CD8-positive, alpha-beta T cell (primary cell): ENCODE measurements at regions of chr21 and their contacts with region 1.

Region 1: DNA sequence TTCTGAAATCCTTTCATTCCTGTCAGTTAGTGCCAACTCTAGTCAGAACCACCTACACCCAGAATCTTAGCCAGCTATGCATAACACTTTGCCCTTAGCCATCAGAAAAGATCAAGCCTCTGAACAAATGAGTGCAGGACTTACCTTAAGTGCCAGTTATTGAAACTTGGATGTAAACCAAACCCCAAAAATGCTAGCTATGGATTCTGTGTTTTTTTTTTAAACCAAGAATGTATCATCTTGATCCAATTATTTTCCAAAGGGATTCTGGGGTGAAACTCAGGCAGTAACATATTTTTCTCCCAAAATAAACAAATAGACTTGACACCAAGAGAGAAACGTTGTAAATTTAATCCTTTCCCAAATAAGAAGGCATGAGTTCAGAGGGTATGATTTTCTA is 538.6 kb upstream of the ADAMTS5 start:
- DNase-seq: no peak
- ATAC-seq: no peak
- H3K4me3 ChIP-seq: no peak overlapping the region
- H3K4me3 Mint-ChIP-seq: no peak overlapping the region
- H3K27ac ChIP-seq: no peak overlapping the region
- H3K27ac Mint-ChIP-seq: no peak overlapping the region
- H3K4me1 ChIP-seq: no peaks in the 10 kb centered on the region
- H3K4me1 Mint-ChIP-seq: no peaks in the 10 kb centered on the region
- H3K27me3 ChIP-seq: no peaks in the 10 kb centered on the region
- H3K27me3 Mint-ChIP-seq: no peaks in the 10 kb centered on the region
- CTCF ChIP-seq: no peak

Region 2: GRCh38 chr21:27017246-27017645 is 488.3 kb before region 1 on chr21:
- CTCF ChIA-PET with region 1: no interaction called
- POLR2A ChIA-PET with region 1: no interaction called
- intact Hi-C with region 1: loop called in 1 of 2 experiments (anchors 5 kb)
- DNase-seq: no peak
- ATAC-seq: no peak
- H3K4me3 ChIP-seq: no peak overlapping the region
- H3K4me3 Mint-ChIP-seq: no peak overlapping the region
- H3K27ac ChIP-seq: no peak overlapping the region
- H3K27ac Mint-ChIP-seq: no peak overlapping the region
- H3K4me1 ChIP-seq: no peaks in the 10 kb centered on the region
- H3K4me1 Mint-ChIP-seq: no peaks in the 10 kb centered on the region
- H3K27me3 ChIP-seq: no peaks in the 10 kb centered on the region
- H3K27me3 Mint-ChIP-seq: no peaks in the 10 kb centered on the region
- CTCF ChIP-seq: no peak